Posterior cingulate gyrus (tissue), 11 donors: ENCODE measurements at regions of chr1 and their contacts with region 1.

Region 1: DNA sequence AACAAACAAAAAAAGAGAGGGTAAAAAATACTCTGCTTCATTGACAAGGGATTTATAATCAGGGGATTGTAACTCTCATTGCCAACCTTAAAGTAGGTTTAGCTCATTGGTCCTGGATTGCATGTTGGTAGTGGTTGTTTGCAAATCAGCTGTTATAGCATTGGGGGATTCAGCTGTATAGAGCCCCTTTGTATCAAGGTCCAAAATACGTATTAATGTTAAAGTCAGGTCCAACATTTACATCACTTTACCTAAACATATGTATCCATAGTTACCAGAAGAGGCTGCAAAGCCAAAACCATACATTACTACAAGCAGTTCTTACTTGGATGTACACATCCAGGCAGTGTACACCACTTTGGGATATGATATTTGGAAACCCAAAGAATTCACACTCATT is 29.4 kb downstream of the RPS27 start:
- DNase-seq: no peak

Region 2: DNA sequence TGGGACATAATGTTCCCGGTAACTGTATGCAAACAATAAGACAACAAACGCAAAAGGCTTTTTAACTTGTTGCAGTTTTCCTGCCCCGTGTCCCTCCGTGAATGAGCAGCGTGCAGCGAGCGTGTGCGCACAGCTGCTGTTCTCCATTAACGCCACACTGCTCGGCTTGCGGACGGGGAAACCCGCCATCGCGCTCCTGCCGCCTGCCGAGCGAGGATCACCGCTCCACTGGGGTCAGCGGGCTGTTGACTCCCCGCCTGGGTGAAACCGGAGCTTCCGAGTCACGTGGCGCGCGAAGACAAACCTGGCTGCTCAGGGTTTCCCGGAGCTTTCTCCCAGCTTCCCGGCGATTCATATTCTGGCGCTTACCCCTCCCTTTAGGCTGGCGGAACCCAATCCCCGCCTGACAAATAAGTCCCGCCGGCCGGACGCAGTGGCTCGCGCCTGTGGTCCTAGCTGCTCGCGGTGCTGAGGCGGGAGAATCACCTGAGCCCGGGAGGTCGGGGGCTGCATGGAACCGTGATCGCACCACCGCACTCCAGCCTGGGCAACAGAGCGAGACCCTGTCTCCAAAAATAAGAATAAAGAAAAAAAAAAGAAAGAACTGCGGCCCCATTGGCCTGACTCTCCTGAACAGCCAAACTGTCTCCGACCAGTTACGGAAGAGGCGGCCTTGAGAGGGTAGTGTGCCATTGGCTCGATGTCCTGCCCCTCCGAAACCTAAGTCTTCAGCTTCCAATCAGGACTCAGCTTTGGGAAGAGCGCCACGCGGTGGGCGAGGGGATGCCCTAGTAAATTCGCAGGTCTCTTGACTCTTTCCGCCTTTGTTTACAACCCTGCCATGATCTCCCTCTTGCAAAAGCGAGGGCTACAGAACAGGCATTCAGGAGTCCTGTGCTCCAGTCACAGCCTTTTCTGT is 52.6 kb before region 1 on chr1 and contains the start of gene CREB3L4:
- intact Hi-C with region 1: no loop called
- DNase-seq: peak; percentile 82 to 99 (median 90)

Region 3: DNA sequence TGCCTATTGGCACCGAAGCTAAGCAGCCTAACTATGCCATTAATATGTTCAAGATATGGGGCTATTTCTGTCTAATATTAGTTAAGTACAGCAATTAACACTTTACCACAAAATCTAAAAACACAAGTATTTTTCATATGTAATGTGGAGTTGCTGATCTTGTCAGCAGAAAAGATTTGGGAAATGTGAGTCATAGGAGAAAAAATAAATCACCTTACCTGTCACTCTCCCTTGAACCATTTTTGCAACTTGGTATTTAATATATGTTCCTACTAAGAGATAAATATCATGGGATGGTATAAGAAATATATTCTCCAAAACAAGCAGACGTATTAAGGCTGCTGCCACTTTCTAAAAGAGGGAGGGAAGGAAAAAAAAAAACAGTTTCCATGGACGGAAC is 117.9 kb after region 1 on chr1:
- intact Hi-C with region 1: loop called (anchors 10 kb)
- DNase-seq: no peak

Region 4: DNA sequence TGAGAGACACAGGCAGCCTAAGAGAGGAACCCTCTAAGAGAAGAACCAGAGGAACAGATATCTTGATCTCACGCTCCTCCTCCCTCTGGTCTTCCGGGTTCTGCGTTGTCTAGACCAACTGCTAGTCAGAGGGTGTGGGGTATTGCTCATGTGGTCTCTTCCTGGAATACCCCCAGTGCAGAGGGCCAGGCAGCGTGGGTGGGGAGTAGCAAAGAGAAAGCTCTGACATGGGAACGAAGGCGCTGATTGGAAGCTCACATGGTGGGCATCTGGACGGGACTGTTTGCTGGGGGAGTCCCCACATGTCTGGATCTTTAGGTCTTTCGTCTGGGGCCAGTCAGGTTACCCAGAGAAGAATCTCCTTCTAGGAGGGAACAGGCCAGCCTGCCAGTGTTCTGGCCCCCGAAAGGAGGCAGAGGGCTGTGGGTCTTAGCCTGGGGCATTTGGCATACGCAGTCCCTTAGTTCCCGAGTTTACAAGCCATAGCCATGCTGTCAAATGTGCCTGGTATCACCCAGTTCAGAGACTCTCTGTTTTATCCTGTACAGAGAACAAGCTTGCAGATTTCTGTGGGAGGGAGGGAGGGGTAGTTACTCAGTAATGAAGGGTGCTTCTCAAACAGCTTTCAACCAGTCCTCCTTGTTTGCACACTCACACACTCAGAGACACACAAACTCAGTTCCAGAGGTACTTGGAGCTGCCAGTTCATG is 366.9 kb after region 1 on chr1:
- intact Hi-C with region 1: no loop called
- DNase-seq: no peak